ENCODE measurements at regions of chr14 and their contacts with region 1.

Region 1: DNA sequence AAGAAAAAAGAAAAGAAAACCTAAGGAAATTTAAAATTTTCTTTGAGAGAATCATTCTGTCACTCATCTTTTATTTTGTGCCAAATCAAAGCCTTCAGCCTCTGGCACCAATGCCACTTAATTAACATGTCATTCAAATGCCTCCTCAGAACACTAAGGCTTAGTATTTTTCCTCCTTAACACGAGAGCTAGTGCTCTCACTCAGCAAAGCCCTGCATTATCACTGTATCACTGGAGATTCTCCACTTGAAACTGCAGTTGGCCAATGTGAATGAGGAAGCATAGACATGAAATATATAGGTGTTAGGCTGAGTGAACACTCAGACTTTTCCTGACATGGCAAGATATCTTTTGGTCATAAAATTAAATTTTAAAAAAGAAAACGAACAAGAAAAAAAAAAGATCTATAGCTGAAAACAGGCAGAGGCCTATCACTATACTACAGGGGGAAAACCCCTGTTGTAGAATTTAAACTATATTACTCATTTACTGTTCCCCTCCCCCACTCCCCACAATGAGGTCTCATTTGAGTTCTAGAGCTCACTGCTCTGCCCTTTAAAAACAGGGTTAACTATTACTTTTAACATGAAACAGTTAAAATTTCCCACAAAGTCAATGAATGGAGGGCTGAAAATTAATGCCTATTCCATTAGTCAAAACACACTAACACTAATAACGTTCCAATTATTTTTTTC is 5.1 kb downstream of the MBIP start:
- DNase-seq: no peak
- ATAC-seq: no peak
- H3K4me3 ChIP-seq: no peak overlapping the region
- H3K27ac ChIP-seq: no peak overlapping the region
- H3K4me1 ChIP-seq: peaks cover 27% of the 10 kb centered on the region
- H3K27me3 ChIP-seq: no peaks in the 10 kb centered on the region
- CTCF ChIP-seq: no peak

Region 2: GRCh38 chr14:35883677-35884293 is 431.5 kb before region 1 on chr14:
- CTCF ChIA-PET with region 1: no interaction called
- POLR2A ChIA-PET with region 1: no interaction called
- intact Hi-C with region 1: loop called (anchors 2 kb)
- DNase-seq: peak; percentile 60
- ATAC-seq: peak; percentile 75
- H3K4me3 ChIP-seq: peak overlapping the region; percentile 41; the same call in 1 of the 2 replicates
- H3K27ac ChIP-seq: no peak overlapping the region
- H3K4me1 ChIP-seq: peaks cover 12% of the 10 kb centered on the region
- H3K27me3 ChIP-seq: no peaks in the 10 kb centered on the region
- CTCF ChIP-seq: peak; percentile 92

Region 3: DNA sequence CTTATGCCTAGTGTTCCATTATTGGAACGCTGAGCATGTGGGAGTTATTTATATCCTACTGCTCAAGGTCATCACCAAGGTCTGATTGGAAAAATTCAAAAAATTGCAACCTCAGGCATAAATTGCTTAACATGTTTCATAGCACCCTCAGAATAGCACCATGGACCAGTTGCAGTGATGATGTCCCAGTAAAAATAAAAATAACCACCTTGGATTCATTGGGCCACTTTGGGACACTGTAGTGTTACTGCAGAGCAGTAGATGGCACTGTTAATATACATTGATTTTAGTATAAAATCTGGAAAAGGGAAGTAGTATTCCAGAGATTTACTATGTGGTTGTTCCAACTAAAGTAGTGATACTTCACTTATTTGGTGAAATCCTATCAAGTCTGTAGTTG is 107.8 kb before region 1 on chr14:
- CTCF ChIA-PET with region 1: no interaction called
- POLR2A ChIA-PET with region 1: no interaction called
- intact Hi-C with region 1: loop called (anchors 1 kb)
- DNase-seq: peak; percentile 51
- ATAC-seq: peak; percentile 85
- H3K4me3 ChIP-seq: no peak overlapping the region
- H3K27ac ChIP-seq: no peak overlapping the region
- H3K4me1 ChIP-seq: no peaks in the 10 kb centered on the region
- H3K27me3 ChIP-seq: peaks cover 44% of the 10 kb centered on the region
- CTCF ChIP-seq: peak; percentile 75

Region 4: DNA sequence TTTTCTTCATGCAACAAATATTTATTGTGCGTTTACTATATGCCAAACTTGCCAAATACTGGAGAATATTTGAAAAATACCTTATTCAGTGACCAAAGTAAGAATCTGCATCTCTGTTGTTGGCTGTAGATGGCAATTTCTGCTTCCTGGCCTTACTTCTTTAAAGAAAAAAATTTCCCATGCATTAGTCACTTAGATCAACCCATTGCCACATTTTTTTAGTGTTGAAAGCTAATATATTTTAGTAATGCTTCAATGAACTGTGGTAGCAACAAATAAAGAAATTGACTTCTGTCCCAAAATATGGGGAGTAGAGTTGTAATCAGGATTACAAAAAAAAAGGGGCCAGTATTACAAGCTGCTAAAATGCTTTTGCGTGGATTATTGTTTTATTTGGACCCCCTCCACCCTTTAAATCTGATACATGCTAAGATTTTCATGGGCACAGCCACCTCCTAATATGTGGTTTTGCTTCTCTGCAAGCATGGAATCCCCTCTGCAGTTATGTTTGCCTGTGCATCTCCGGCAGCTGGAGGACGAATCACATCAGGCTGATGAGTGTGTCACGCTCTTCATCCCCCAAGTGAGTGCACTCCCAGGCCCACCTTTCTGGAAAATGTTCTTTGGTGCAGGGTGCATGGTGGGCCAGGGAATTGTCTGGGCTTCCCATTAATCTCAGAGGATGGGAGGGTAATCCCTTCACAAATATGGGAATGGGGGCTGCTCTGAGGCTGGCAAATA is 100.7 kb before region 1 on chr14:
- CTCF ChIA-PET with region 1: interaction called, 3 read pairs
- POLR2A ChIA-PET with region 1: interaction called, 6 read pairs
- intact Hi-C with region 1: loop called (anchors 1 kb)
- DNase-seq: peak; percentile 47
- ATAC-seq: peak; percentile 49
- H3K4me3 ChIP-seq: peak overlapping the region; percentile 37; the same call in 1 of the 2 replicates
- H3K27ac ChIP-seq: peak overlapping the region; percentile 33; the same call in 1 of the 2 replicates
- H3K4me1 ChIP-seq: peaks cover 43% of the 10 kb centered on the region
- H3K27me3 ChIP-seq: peaks cover 26% of the 10 kb centered on the region; the same call in 1 of the 2 replicates
- CTCF ChIP-seq: no peak

Region 5: GRCh38 chr14:36238666-36239363 is 76.5 kb before region 1 on chr14:
- CTCF ChIA-PET with region 1: no interaction called
- POLR2A ChIA-PET with region 1: no interaction called
- intact Hi-C with region 1: no loop called
- DNase-seq: peak; percentile 73
- ATAC-seq: peak; percentile 95
- H3K4me3 ChIP-seq: no peak overlapping the region
- H3K27ac ChIP-seq: no peak overlapping the region
- H3K4me1 ChIP-seq: peaks cover 18% of the 10 kb centered on the region
- H3K27me3 ChIP-seq: peaks cover 16% of the 10 kb centered on the region; the same call in 1 of the 2 replicates
- CTCF ChIP-seq: no peak

Region 6: DNA sequence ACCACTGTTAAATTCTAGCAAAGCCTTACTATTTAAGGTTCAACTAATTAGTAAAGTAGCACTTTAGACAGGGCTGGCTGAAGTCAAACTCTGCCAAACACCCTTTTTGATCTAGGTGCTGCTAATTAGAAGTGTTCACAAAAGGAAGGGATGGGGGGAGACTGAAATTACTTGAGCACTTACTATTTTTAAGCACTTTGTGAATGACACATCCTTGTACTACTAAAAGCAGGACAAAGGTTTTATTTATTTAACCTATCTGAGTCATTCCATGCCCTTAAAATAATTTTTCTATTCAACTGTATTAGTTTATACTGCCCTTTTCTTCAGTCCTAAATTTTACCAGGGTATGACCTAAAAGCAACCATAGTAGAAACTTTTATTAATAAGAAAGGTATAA is 15.0 kb before region 1 on chr14:
- CTCF ChIA-PET with region 1: no interaction called
- POLR2A ChIA-PET with region 1: no interaction called
- intact Hi-C with region 1: loop called (anchors 2 kb)
- DNase-seq: peak; percentile 46
- ATAC-seq: peak; percentile 87
- H3K4me3 ChIP-seq: no peak overlapping the region
- H3K27ac ChIP-seq: no peak overlapping the region
- H3K4me1 ChIP-seq: peaks cover 17% of the 10 kb centered on the region
- H3K27me3 ChIP-seq: no peaks in the 10 kb centered on the region
- CTCF ChIP-seq: no peak

Region 7: DNA sequence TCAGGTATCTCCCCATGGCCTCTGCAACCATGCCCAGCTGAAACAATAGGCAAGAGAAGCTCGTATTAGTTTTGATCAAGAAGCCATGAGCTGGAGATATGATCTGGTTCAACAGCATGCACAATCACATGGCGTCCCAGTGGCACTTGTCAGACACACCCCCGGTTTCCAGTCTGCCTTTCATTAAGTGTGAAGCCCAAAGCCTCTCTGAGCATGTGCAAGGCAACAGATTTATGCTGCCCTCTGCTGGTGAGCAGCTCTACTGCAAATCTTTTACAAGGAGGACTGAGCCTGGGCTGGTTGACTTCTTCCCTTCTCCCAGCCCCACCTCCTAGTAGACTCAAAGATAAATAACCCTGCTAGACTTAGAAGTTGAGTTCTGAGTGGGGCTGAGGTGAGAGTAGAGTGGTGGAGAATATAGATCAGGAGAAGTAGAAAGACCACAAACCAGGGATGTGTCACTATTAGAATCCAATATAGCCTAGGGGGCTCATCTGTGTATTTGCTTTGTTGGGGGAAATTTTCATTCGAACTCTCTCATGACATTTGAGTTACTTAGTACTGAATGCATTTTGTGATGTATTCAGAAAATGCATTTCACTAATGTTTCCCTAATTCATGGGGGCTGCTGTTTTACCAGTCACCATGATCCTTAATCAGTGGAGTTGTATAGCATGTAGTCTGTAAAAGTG is 58.8 kb after region 1 on chr14:
- CTCF ChIA-PET with region 1: no interaction called
- POLR2A ChIA-PET with region 1: no interaction called
- intact Hi-C with region 1: loop called (anchors 1 kb)
- DNase-seq: peak; percentile 93
- ATAC-seq: peak; percentile 99
- H3K4me3 ChIP-seq: no peak overlapping the region
- H3K27ac ChIP-seq: no peak overlapping the region
- H3K4me1 ChIP-seq: no peaks in the 10 kb centered on the region
- H3K27me3 ChIP-seq: 0 out of 2 replicates have a peak, but pooled peaks cover 5% of the 10 kb centered on the region
- CTCF ChIP-seq: peak; percentile 93

Region 8: DNA sequence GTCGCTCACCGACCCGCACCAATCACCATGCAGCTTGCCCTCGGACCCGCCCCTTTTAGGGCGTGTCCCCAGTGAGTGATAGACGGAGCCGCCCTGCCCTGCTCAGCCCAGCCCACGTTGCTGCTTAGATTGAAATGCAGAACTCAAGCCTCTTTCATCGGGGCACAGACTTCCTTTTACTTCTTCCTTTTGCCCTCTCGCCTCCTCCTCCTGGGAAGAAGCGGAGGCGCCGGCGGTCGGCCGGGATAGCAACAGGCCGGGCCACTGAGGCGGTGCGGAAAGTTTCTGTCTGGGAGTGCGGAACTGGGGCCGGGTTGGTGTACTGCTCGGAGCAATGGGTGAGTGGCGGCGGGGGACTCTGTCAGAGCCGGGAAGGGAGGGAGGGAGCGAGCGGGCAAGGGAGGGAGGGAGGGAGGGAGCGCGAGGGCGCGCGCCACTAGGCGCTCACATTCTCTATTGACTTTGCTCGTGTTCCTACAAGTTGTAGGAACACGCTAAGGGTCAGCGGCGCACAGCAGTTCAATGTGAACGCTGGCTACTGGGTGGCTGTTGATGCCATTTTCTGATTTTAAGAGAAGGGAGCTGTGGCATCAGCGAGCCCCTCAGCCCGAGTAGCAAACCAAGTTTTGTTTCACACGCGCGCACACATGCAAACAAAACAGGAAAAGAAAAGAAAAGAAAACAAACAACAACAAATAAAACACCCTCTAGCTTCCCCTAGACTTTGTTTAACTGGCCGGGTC is 346.6 kb after region 1 on chr14 and contains the start of gene PAX9:
- CTCF ChIA-PET with region 1: no interaction called
- POLR2A ChIA-PET with region 1: no interaction called
- intact Hi-C with region 1: loop called (anchors 5 kb)
- DNase-seq: peak; percentile 99
- ATAC-seq: peak; percentile 78
- H3K4me3 ChIP-seq: peak within 1 kb of the TSS; percentile 89
- H3K27ac ChIP-seq: peak within 1 kb of the TSS; percentile 77
- H3K4me1 ChIP-seq: peaks cover 25% of the 10 kb centered on the region
- H3K27me3 ChIP-seq: no peaks in the 10 kb centered on the region
- CTCF ChIP-seq: no peak
- total RNA-seq, gene PAX9: 14.3 and 14.9 TPM in 2 replicates

Measured in PC-3 (cell line).